Endothelial cell of umbilical vein (primary cell): ENCODE measurements at regions of chr11 and their contacts with region 1.

Region 1: DNA sequence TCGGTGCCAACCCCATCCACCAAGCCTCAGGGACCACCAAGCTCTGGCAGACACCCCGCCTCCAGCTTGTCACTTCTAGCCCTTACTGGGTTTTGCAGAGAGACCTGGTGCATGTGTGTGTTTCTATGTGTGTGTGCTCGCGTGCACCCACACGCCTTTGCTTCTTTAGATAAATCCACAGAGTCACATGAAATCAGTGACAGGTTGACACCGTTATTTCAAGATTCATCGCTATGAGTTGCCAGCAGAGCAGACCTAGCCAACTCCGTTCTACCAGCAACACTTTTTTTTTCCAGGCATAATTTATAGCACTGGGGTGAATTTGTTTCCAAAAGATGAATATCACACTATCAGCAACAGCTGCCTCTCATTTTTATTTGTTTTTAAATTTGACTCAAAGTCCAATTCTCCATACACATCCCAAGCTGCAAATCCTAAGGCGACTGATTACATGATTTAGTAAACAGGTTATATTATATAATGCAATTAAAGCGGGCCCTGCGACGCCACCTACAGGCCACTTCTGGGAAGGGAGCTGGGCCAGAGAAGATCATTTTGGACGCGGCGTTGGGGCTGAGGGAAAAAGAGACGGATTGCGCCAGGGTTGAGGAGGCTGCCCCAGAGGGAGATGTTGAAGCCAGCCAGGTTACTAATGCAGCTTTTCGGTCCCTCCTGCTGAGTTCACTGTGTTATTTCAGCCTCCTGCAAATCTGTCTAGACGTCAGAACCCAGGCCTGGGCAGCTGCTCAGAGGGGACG is 150.5 kb downstream of the FEZ1 start:
- DNase-seq: peak; percentile 67
- H3K4me3 ChIP-seq: no peak overlapping the region
- H3K27ac ChIP-seq: no peak overlapping the region
- H3K4me1 ChIP-seq: no peaks in the 10 kb centered on the region
- H3K27me3 ChIP-seq: no peaks in the 10 kb centered on the region
- CTCF ChIP-seq: peak; percentile 84 to 90
- POLR2A ChIP-seq: no peak

Region 2: DNA sequence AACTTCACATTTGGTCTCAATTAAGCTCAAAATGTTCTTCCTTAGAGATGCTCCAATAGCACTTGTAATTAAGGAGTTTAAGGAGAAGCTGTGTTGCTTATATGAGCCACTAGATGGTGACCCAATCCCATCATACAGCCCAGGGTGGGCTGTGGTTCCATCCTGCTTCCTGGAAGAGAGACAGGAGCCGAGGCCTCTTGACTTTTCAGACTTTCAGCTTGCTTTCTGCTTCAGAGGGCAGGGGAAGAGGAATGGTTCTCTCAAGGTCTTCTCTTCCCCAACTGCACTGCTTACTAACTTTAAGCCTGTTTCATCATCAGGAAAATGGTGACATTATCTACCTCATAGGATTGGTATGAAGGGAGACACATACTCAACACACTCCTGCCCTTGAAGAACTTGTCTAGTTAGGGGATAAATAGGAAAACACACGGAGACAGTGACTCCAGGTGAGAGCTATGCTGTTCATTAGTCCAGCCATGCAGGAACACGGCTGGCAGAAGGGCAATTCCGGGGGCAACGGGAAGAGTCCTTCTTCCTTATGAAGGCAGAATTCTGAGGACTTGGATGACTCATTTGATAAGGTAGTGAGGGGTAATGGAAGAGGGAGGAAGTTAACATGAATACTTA is 254.2 kb before region 1 on chr11:
- CTCF ChIA-PET with region 1: interaction called, 107 read pairs
- POLR2A ChIA-PET with region 1: no interaction called
- dilution Hi-C with region 1: no loop called
- intact Hi-C with region 1: loop called (anchors 1 kb)
- DNase-seq: peak; percentile 81
- H3K4me3 ChIP-seq: no peak overlapping the region
- H3K27ac ChIP-seq: peak overlapping the region; percentile 4
- H3K4me1 ChIP-seq: peaks cover 11% of the 10 kb centered on the region
- H3K27me3 ChIP-seq: no peaks in the 10 kb centered on the region
- CTCF ChIP-seq: peak; percentile 56 to 66
- POLR2A ChIP-seq: no peak

Region 3: DNA sequence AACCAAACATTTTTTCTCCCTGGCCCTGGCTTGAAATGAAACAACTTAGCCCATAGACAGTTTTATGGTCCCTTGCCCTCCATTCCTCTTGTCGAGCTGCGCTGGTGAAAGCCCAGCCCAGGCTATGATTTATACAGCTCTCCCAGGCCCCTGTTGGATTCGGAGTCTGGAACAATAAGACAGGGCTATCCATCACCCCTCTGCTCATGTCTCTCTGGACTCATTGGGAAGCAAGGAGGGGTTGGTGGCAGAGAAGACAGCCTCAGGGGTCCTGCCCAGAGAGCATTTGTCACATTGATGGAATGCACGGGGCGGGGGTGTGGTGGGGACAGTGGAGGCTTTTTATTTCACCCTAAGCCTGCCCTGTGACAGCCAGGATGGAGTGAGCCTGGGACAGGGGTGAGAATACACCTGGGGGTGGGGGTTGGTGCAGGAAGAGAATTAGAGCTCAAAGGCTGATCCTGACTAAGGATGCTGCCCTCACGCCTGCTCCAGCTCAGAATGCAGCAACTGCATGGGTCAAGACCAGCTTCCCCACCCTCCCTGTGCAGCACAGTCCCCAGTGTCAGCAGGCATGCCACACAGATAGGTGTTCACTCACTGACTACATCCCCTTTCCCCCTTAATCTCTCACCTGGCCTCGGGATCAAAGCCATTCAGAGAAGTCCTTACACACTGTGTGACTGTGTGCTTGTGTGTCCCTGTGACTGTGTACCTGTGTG is 191.1 kb before region 1 on chr11:
- CTCF ChIA-PET with region 1: interaction called, 23 read pairs
- POLR2A ChIA-PET with region 1: no interaction called
- dilution Hi-C with region 1: no loop called
- intact Hi-C with region 1: no loop called
- DNase-seq: no peak
- H3K4me3 ChIP-seq: no peak overlapping the region
- H3K27ac ChIP-seq: no peak overlapping the region
- H3K4me1 ChIP-seq: no peaks in the 10 kb centered on the region
- H3K27me3 ChIP-seq: peaks cover 0 to 9% of the 10 kb centered on the region in 2 experiments
- CTCF ChIP-seq: no peak
- POLR2A ChIP-seq: no peak

Region 4: DNA sequence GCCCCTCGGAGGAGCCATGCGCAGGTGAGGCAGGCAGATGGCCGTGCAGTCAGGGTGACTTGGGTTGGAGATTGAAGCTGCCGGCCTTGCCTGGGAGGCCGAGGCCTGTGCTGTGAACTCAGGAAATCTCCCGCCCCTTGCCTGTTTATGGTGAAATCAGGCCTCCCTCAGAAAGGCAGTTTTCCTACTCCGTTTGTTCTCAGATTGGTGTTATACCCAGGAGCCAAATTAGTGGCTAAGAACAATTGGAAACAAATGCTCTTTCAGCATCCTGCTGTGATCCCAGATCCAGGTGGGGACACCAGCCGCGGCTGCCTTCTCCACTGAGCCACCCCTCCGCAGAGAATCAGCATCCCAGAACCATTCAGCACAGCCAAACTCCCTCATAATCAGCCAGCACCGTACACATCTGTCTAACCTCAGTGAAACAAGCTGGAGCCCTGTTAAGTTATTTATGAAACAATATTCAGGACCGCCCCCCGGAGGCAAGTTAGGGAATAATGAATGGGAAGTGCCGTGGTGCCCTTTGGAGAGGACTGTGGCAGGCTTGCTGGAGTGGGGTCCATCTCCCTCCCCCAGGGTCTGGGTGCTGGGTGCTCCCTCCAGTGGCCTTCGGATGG is 121.1 kb before region 1 on chr11:
- CTCF ChIA-PET with region 1: interaction called, 21 read pairs
- POLR2A ChIA-PET with region 1: no interaction called
- dilution Hi-C with region 1: no loop called
- intact Hi-C with region 1: loop called (anchors 1 kb)
- DNase-seq: peak; percentile 45
- H3K4me3 ChIP-seq: no peak overlapping the region
- H3K27ac ChIP-seq: no peak overlapping the region
- H3K4me1 ChIP-seq: no peaks in the 10 kb centered on the region
- H3K27me3 ChIP-seq: peaks cover 0 to 2% of the 10 kb centered on the region in 2 experiments
- CTCF ChIP-seq: peak in 1 of 2 donors; percentile 28
- POLR2A ChIP-seq: no peak

Region 5: GRCh38 chr11:125287491-125288210 is 57.9 kb before region 1 on chr11:
- CTCF ChIA-PET with region 1: interaction called, 14 read pairs
- POLR2A ChIA-PET with region 1: no interaction called
- dilution Hi-C with region 1: no loop called
- intact Hi-C with region 1: no loop called
- DNase-seq: peak; percentile 38
- H3K4me3 ChIP-seq: no peak overlapping the region
- H3K27ac ChIP-seq: no peak overlapping the region
- H3K4me1 ChIP-seq: peaks cover 5% of the 10 kb centered on the region
- H3K27me3 ChIP-seq: peaks cover 0 to 3% of the 10 kb centered on the region in 2 experiments
- CTCF ChIP-seq: no peak
- POLR2A ChIP-seq: no peak

Region 6: DNA sequence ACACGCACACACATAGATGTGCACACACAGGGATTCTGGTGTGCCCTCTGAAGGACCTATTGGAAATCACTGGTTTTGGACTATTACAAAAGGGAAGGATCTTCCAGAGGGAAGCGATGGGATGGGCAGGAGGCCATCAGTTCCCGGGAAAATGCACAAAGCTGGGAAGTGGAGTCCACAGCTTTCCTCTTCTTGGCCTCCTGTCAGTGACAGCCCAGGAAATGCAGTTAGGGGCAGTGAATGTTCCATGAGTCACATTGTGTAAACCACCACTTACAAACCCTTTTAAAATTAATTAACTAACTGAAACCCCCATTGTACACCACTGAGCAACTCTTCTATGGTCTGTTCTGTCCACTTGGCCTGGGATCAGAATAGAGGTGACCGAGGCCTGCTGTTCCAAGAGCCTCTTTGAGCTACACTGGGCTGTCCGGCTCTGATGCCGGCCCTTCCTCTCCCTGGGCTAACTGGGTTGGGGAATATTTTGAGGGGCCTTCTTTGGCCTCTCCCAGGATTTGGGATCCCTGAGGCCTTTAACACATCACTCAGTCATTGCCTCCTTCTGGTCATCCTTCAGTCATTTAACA is 12.7 kb after region 1 on chr11:
- CTCF ChIA-PET with region 1: interaction called, 26 read pairs
- POLR2A ChIA-PET with region 1: no interaction called
- dilution Hi-C with region 1: no loop called
- intact Hi-C with region 1: no loop called
- DNase-seq: no peak
- H3K4me3 ChIP-seq: no peak overlapping the region
- H3K27ac ChIP-seq: no peak overlapping the region
- H3K4me1 ChIP-seq: no peaks in the 10 kb centered on the region
- H3K27me3 ChIP-seq: no peaks in the 10 kb centered on the region
- CTCF ChIP-seq: no peak
- POLR2A ChIP-seq: no peak

Region 7: GRCh38 chr11:125532668-125533067 is 187.1 kb after region 1 on chr11:
- CTCF ChIA-PET with region 1: no interaction called
- POLR2A ChIA-PET with region 1: no interaction called
- dilution Hi-C with region 1: no loop called
- intact Hi-C with region 1: no loop called
- DNase-seq: no peak
- H3K4me3 ChIP-seq: no peak overlapping the region
- H3K27ac ChIP-seq: no peak overlapping the region
- H3K4me1 ChIP-seq: no peaks in the 10 kb centered on the region
- H3K27me3 ChIP-seq: peaks cover 0 to 3% of the 10 kb centered on the region in 2 experiments
- CTCF ChIP-seq: no peak
- POLR2A ChIP-seq: no peak

Region 8: GRCh38 chr11:125874556-125875124 is 529.0 kb after region 1 on chr11:
- CTCF ChIA-PET with region 1: no interaction called
- POLR2A ChIA-PET with region 1: no interaction called
- dilution Hi-C with region 1: no loop called
- intact Hi-C with region 1: loop called (anchors 2 kb)
- DNase-seq: peak; percentile 66
- H3K4me3 ChIP-seq: no peak overlapping the region
- H3K27ac ChIP-seq: no peak overlapping the region
- H3K4me1 ChIP-seq: no peaks in the 10 kb centered on the region
- H3K27me3 ChIP-seq: no peaks in the 10 kb centered on the region
- CTCF ChIP-seq: peak; percentile 70 to 77
- POLR2A ChIP-seq: no peak